Naive thymus-derived CD4-positive, alpha-beta T cell (primary cell): ENCODE measurements at regions of chr19 and their contacts with region 1.

Region 1: DNA sequence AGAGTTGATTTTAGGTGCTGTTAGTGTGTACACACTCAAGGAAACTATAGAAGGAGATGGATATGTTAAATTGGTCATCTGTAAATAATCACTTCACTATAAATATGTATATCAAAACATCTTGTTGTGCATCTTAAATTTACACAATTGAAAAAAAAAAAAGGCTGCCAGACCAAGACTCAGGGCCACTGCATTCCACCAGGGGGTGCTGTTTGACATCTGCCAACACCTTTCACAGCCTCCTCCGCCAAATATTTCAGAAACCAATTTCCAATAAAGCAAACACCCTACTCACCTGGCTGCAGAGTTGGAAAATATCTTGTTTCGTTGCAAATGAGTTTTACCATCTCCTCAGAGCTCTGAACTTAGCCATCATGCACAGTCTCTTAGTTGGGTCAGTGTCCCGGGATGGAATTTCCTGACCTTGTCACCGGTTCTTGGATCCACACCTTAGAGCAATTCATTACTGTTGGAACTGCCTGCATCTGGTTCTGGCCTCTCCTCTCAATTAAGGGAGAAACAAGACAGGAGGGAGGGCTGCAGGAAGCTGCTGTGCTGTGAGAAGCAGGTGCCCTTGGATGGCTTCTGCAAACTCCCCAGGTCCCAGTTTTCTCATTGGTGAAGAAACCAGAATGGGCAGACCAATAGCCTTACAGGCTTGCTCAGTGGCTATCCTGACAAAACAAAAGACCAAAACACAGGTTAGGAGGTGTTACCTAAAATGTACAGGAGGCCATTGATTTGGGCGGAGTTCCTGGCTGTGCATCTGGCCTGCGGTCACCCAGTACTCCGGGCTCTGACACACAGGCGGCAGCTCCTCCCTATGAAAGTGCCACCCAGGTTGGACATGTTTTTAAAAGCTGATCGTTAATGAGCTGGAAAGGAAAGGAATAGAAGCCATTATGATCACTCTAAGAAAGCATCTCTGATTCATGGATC is 746.6 kb downstream of the UQCRFS1 start:
- DNase-seq: peak; percentile 22 to 68 (median 50)
- ATAC-seq: peak; percentile 61
- H3K4me3 ChIP-seq: no peak overlapping the region
- H3K4me3 Mint-ChIP-seq: peak overlapping the region in 1 of 10 donors; percentile 8
- H3K27ac ChIP-seq: no peak overlapping the region
- H3K27ac Mint-ChIP-seq: peak overlapping the region in 2 of 9 donors; percentile 62 to 83
- H3K4me1 ChIP-seq: peaks cover 11 to 15% of the 10 kb centered on the region in 2 donors
- H3K4me1 Mint-ChIP-seq: peaks cover 7 to 57% (median 25%) of the 10 kb centered on the region in 7 donors
- H3K27me3 ChIP-seq: no peaks in the 10 kb centered on the region
- H3K27me3 Mint-ChIP-seq: peaks cover 0 to 6% (median 0%) of the 10 kb centered on the region in 5 donors

Region 2: DNA sequence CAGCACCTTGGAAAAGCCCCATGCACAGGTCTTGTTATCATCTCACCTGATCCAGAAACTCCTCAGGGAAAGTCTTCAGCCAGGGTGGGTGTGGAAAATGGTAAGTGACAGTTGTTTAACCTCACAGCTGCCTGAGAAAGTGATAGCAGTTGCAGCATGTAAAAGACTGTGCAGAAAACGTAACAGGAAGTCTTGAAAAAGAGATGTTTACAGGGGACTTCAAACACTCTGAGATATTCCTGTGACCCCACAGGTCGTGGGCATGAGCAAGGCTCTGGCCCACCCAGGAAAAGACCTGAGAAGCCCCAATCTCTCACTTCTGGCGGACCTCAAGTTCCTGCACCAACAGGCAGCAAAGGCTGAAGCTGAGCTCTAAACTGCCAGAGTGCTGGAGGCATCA is 80.3 kb before region 1 on chr19:
- CTCF ChIA-PET with region 1: no interaction called
- POLR2A ChIA-PET with region 1: no interaction called
- intact Hi-C with region 1: loop called in 1 of 2 experiments (anchors 5 kb)
- DNase-seq: no peak
- ATAC-seq: no peak
- H3K4me3 ChIP-seq: no peak overlapping the region
- H3K4me3 Mint-ChIP-seq: peak overlapping the region in 2 of 10 donors; percentile 73 to 82
- H3K27ac ChIP-seq: peak overlapping the region; percentile 51
- H3K27ac Mint-ChIP-seq: peak overlapping the region in 3 of 9 donors; percentile 87 to 93 (median 93)
- H3K4me1 ChIP-seq: no peaks in the 10 kb centered on the region
- H3K4me1 Mint-ChIP-seq: peaks cover 0 to 65% (median 4%) of the 10 kb centered on the region in 7 donors
- H3K27me3 ChIP-seq: no peaks in the 10 kb centered on the region
- H3K27me3 Mint-ChIP-seq: peaks cover 0 to 6% (median 0%) of the 10 kb centered on the region in 5 donors

Region 3: GRCh38 chr19:28949535-28949934 is 483.2 kb after region 1 on chr19:
- CTCF ChIA-PET with region 1: no interaction called
- POLR2A ChIA-PET with region 1: no interaction called
- intact Hi-C with region 1: no loop called
- DNase-seq: no peak
- ATAC-seq: no peak
- H3K4me3 ChIP-seq: no peak overlapping the region
- H3K4me3 Mint-ChIP-seq: no peak overlapping the region
- H3K27ac ChIP-seq: no peak overlapping the region
- H3K27ac Mint-ChIP-seq: no peak overlapping the region
- H3K4me1 ChIP-seq: no peaks in the 10 kb centered on the region
- H3K4me1 Mint-ChIP-seq: no peaks in the 10 kb centered on the region
- H3K27me3 ChIP-seq: no peaks in the 10 kb centered on the region
- H3K27me3 Mint-ChIP-seq: peaks cover 0 to 8% (median 0%) of the 10 kb centered on the region in 5 donors